Common myeloid progenitor, CD34-positive (primary cell): ENCODE measurements at regions of chr11 and their contacts with region 1.

Region 1: GRCh38 chr11:69909561-69910496 is 90.6 kb upstream of the FGF3 start:
- DNase-seq: peak in 1 of 3 donors; percentile 34
- H3K4me3 ChIP-seq: no peak overlapping the region
- H3K27ac ChIP-seq: no peak overlapping the region
- H3K4me1 ChIP-seq: peaks cover 0 to 19% (median 7%) of the 10 kb centered on the region in 4 experiments
- H3K27me3 ChIP-seq: peaks cover 0 to 4% (median 2%) of the 10 kb centered on the region in 5 experiments

Region 2: DNA sequence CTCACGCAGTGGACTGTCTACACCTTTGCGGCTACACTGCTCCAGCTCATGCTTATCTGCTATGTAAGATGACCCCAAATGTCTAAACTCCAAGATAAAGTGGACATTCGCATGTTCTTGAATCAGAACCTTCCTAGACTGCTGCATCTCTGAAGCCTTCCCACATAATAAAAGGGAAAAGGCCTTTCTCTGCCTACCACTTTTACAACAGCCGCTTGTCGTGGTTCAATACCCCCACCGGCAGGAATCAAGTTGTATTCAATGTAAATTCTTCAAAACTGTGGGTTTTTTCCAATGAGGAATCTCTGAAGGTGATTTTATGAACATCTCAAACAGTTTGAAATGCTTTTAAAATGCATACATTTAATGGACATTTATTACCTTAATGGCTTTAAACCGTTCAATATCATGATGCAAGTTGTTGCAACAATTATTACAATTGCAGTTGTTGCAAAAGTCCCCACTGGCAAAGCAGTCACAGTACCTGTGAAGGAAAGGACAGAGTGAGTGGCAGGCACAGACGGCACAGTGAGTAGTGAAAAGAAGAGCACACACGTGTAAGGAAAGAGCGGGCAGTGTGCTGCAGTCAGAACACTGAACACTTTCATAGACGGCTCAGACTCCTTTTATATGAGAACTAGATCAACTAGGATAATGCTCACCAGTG is 1194.2 kb before region 1 on chr11:
- CTCF ChIA-PET with region 1: no interaction called
- POLR2A ChIA-PET with region 1: no interaction called
- DNase-seq: no peak
- H3K4me3 ChIP-seq: no peak overlapping the region
- H3K27ac ChIP-seq: no peak overlapping the region
- H3K4me1 ChIP-seq: no peaks in the 10 kb centered on the region
- H3K27me3 ChIP-seq: no peaks in the 10 kb centered on the region

Region 3: GRCh38 chr11:69726019-69726418 is 183.8 kb before region 1 on chr11:
- CTCF ChIA-PET with region 1: no interaction called
- POLR2A ChIA-PET with region 1: no interaction called
- DNase-seq: no peak
- H3K4me3 ChIP-seq: no peak overlapping the region
- H3K27ac ChIP-seq: no peak overlapping the region
- H3K4me1 ChIP-seq: no peaks in the 10 kb centered on the region
- H3K27me3 ChIP-seq: peaks cover 3 to 92% (median 15%) of the 10 kb centered on the region in 5 experiments

Region 4: GRCh38 chr11:70002433-70002832 is 92.6 kb after region 1 on chr11:
- CTCF ChIA-PET with region 1: no interaction called
- POLR2A ChIA-PET with region 1: no interaction called
- DNase-seq: peak; percentile 14 to 80 (median 55)
- H3K4me3 ChIP-seq: no peak overlapping the region
- H3K27ac ChIP-seq: no peak overlapping the region
- H3K4me1 ChIP-seq: no peaks in the 10 kb centered on the region
- H3K27me3 ChIP-seq: peaks cover 0 to 8% (median 2%) of the 10 kb centered on the region in 5 experiments

Region 5: GRCh38 chr11:70191495-70192140 is 281.8 kb after region 1 on chr11:
- CTCF ChIA-PET with region 1: interaction called, 12 read pairs
- POLR2A ChIA-PET with region 1: no interaction called
- DNase-seq: peak; percentile 35 to 57 (median 50)
- H3K4me3 ChIP-seq: no peak overlapping the region
- H3K27ac ChIP-seq: no peak overlapping the region
- H3K4me1 ChIP-seq: no peaks in the 10 kb centered on the region
- H3K27me3 ChIP-seq: peaks cover 0 to 17% (median 3%) of the 10 kb centered on the region in 5 experiments

Region 6: GRCh38 chr11:70200212-70200844 is 290.5 kb after region 1 on chr11:
- CTCF ChIA-PET with region 1: interaction called, 13 read pairs
- POLR2A ChIA-PET with region 1: no interaction called
- DNase-seq: no peak
- H3K4me3 ChIP-seq: no peak overlapping the region
- H3K27ac ChIP-seq: no peak overlapping the region
- H3K4me1 ChIP-seq: peaks cover 0 to 27% (median 22%) of the 10 kb centered on the region in 4 experiments
- H3K27me3 ChIP-seq: peaks cover 0 to 4% (median 0%) of the 10 kb centered on the region in 5 experiments